ENCODE measurements at regions of chr5 and their contacts with region 1.

Region 1: GRCh38 chr5:683551-684481 is 9.3 kb downstream of the TPPP start:
- DNase-seq: peak; percentile 39
- ATAC-seq: peak in 1 of 2 donors; percentile 62

Region 2: GRCh38 chr5:626850-627249 is 57.0 kb before region 1 on chr5:
- intact Hi-C with region 1: no loop called
- DNase-seq: no peak
- ATAC-seq: no peak

Region 3: GRCh38 chr5:776792-777711 is 93.2 kb after region 1 on chr5:
- intact Hi-C with region 1: loop called in 1 of 2 experiments (anchors 2 kb)
- DNase-seq: no peak
- ATAC-seq: peak in 1 of 2 donors; percentile 5